ENCODE measurements at regions of chr17 and their contacts with region 1.

Region 1: GRCh38 chr17:75405365-75406221 is at the start of gene GRB2:
- DNase-seq: peak; percentile 98 to 100 (median 100)
- ATAC-seq: peak; percentile 78 to 80
- H3K4me3 Mint-ChIP-seq: peak within 1 kb of the TSS; percentile 93 to 100 (median 96)
- H3K27ac Mint-ChIP-seq: peak within 1 kb of the TSS; percentile 88 to 97 (median 93)
- H3K4me1 Mint-ChIP-seq: peaks cover 20 to 57% (median 47%) of the 10 kb centered on the region in 4 donors
- H3K27me3 Mint-ChIP-seq: no peaks in the 10 kb centered on the region
- polyA plus RNA-seq, gene GRB2: 130 to 162 (median 154) TPM

Region 2: GRCh38 chr17:75261336-75262111 is 144.1 kb before region 1 on chr17 and contains the starts of genes GGA3 and MRPS7:
- POLR2A ChIA-PET with region 1: interaction called, 15 read pairs
- DNase-seq: peak; percentile 91 to 100 (median 95)
- ATAC-seq: peak; percentile 91 to 94
- H3K4me3 Mint-ChIP-seq: peak within 1 kb of the TSS; percentile 91 to 99 (median 97)
- H3K27ac Mint-ChIP-seq: peak within 1 kb of the TSS; percentile 100
- H3K4me1 Mint-ChIP-seq: peaks cover 29 to 65% (median 60%) of the 10 kb centered on the region in 4 donors
- H3K27me3 Mint-ChIP-seq: no peaks in the 10 kb centered on the region
- polyA plus RNA-seq, gene GGA3: 6.2 to 20.1 (median 14.7) TPM
- polyA plus RNA-seq, gene MRPS7: 113 to 132 (median 122) TPM

Region 3: GRCh38 chr17:75289115-75289831 is 116.3 kb before region 1 on chr17 and contains the start of gene SLC25A19:
- POLR2A ChIA-PET with region 1: interaction called, 28 read pairs
- DNase-seq: peak; percentile 86 to 99 (median 96)
- ATAC-seq: peak; percentile 90 to 92
- H3K4me3 Mint-ChIP-seq: peak within 1 kb of the TSS; percentile 95 to 100 (median 100)
- H3K27ac Mint-ChIP-seq: peak within 1 kb of the TSS; percentile 98 to 100 (median 100)
- H3K4me1 Mint-ChIP-seq: peaks cover 10 to 24% (median 19%) of the 10 kb centered on the region in 4 donors
- H3K27me3 Mint-ChIP-seq: no peaks in the 10 kb centered on the region
- polyA plus RNA-seq, gene SLC25A19: 11.2 to 15.4 (median 13.3) TPM

Region 4: GRCh38 chr17:75338335-75338734 is 67.3 kb before region 1 on chr17:
- POLR2A ChIA-PET with region 1: interaction called, 10 read pairs
- DNase-seq: peak in 2 of 10 donors; percentile 47 to 49
- ATAC-seq: peak; percentile 53 to 66
- H3K4me3 Mint-ChIP-seq: peak overlapping the region; percentile 42 to 86 (median 73)
- H3K27ac Mint-ChIP-seq: peak overlapping the region; percentile 74 to 92 (median 84)
- H3K4me1 Mint-ChIP-seq: peaks cover 26 to 85% (median 81%) of the 10 kb centered on the region in 4 donors
- H3K27me3 Mint-ChIP-seq: no peaks in the 10 kb centered on the region

Region 5: DNA sequence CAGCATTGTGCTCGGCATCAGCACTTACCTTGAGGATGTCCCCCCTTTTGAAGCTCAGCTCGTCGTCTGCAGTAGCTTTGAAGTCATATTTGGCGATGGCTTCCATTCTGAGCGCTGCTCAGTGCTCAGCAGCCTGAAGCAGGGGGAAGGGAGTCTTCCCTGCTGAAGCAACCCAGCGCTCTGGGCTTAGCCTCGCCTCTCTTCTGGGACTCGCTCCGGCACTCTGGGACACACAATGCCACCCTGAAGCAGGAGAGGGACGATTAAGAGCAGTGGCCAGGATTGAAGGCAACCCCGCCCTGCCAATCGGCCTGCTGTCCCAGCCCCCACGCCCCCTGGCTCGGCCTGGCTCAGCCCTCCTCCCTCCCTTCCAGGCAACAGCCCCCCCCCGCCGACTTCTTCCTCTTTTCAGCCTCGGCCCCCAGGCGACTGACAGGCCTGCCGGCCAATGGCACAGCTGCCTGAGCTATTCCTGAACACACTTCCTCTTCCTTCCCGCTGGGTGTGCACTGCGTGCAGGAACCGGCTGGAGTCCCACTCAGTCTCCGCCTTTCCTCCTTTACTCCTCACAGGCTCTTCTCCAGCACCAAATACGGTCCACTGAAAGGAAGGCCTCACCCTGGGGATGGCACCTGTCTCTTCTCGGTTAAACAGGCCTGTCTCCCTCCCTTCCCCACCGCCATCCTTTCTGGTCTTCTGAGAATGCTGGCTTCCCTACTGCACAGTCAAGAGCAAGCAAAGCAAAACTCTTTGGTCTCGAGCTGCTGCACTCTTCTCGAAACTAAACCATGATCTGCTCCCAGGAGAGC is 11.9 kb before region 1 on chr17:
- POLR2A ChIA-PET with region 1: interaction called, 29 read pairs
- DNase-seq: peak; percentile 45 to 91 (median 63)
- ATAC-seq: peak; percentile 86 to 94
- H3K4me3 Mint-ChIP-seq: peak overlapping the region; percentile 85 to 98 (median 94)
- H3K27ac Mint-ChIP-seq: peak overlapping the region; percentile 83 to 93 (median 89)
- H3K4me1 Mint-ChIP-seq: peaks cover 38 to 89% (median 85%) of the 10 kb centered on the region in 4 donors
- H3K27me3 Mint-ChIP-seq: no peaks in the 10 kb centered on the region

Region 6: DNA sequence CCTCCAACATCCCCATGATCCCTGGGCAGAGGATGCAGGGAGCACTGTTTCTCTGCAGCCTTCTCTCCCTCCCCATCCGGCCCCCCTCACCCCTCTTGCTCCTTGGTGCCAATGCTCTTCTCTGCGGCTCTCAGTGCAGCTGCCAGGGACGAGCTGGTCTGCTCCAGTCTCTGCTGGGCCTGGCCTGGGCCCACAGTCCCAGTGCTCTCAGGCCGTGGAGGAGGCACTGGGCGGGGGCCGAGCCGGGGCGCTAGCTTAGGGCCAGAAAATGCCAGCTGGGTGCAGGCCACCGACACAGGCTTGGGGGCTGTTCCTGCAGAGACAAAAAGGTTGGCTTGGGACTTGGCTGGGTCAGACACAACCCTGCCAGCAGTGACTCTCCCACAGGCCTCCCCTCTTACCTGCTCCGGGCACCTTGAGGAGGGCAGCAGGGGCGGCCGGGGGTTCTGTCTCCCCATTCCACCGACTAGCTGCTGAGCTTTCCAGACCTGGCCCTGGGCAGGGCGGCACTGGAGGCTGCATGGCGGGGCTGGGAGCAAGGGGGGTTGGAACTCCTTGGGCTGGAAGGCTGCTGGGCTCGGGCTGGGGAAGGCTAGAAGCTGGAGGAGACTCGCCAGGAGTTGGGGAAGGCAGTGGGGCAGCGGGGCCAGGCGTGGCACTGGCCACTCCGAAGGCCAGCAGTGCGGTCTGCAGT is 95.9 kb after region 1 on chr17:
- POLR2A ChIA-PET with region 1: no interaction called
- DNase-seq: no peak
- ATAC-seq: no peak
- H3K4me3 Mint-ChIP-seq: no peak overlapping the region
- H3K27ac Mint-ChIP-seq: peak overlapping the region in 1 of 10 donors; percentile 49
- H3K4me1 Mint-ChIP-seq: peaks cover 3 to 9% (median 8%) of the 10 kb centered on the region in 4 donors
- H3K27me3 Mint-ChIP-seq: no peaks in the 10 kb centered on the region

Region 7: GRCh38 chr17:75549221-75550138 is 143.9 kb after region 1 on chr17:
- POLR2A ChIA-PET with region 1: no interaction called
- DNase-seq: no peak
- ATAC-seq: no peak
- H3K4me3 Mint-ChIP-seq: no peak overlapping the region
- H3K27ac Mint-ChIP-seq: peak overlapping the region in 1 of 10 donors; percentile 27
- H3K4me1 Mint-ChIP-seq: peaks cover 0 to 5% (median 3%) of the 10 kb centered on the region in 4 donors
- H3K27me3 Mint-ChIP-seq: no peaks in the 10 kb centered on the region